T-cell (primary cell): ENCODE measurements at regions of chr1 and their contacts with region 1.

Region 1: GRCh38 chr1:52569449-52570210 is 16.7 kb upstream of the TUT4 start:
- DNase-seq: no peak
- ATAC-seq: peak in 1 of 4 experiments; percentile 23
- H3K4me3 ChIP-seq: no peak overlapping the region
- H3K4me3 Mint-ChIP-seq: peak overlapping the region in 1 of 3 donors; percentile 27
- H3K27ac ChIP-seq: no peak overlapping the region
- H3K27ac Mint-ChIP-seq: peak overlapping the region; percentile 25
- H3K4me1 ChIP-seq: peaks cover 4 to 6% of the 10 kb centered on the region in 2 experiments
- H3K4me1 Mint-ChIP-seq: peaks cover 16 to 30% (median 24%) of the 10 kb centered on the region in 3 donors
- H3K27me3 ChIP-seq: no peaks in the 10 kb centered on the region
- H3K27me3 Mint-ChIP-seq: no peaks in the 10 kb centered on the region

Region 2: DNA sequence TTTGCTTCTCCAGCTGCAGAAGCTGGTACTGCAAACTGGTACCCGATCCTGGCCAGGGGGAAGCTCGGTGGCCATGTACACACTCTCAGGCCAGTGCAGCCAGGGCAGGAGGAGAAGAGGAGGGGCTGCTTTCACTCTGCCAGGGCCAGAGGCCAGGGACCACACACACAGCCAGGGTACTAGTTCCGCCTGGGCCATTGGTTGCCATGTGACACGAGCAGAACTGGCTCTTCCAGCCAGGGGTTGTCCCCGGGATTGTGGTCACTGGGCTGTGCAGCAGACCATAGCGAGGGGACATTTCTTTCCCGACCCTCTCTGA is 59.7 kb after region 1 on chr1:
- CTCF ChIA-PET with region 1: no interaction called
- POLR2A ChIA-PET with region 1: interaction called in 1 of 2 experiments, 10 read pairs
- DNase-seq: no peak
- ATAC-seq: no peak
- H3K4me3 ChIP-seq: no peak overlapping the region
- H3K4me3 Mint-ChIP-seq: no peak overlapping the region
- H3K27ac ChIP-seq: no peak overlapping the region
- H3K27ac Mint-ChIP-seq: peak overlapping the region in 1 of 2 donors; percentile 73
- H3K4me1 ChIP-seq: peaks cover 10 to 43% of the 10 kb centered on the region in 2 experiments
- H3K4me1 Mint-ChIP-seq: peaks cover 47 to 55% (median 49%) of the 10 kb centered on the region in 3 donors
- H3K27me3 ChIP-seq: no peaks in the 10 kb centered on the region
- H3K27me3 Mint-ChIP-seq: no peaks in the 10 kb centered on the region